ENCODE measurements at regions of chr5 and their contacts with region 1.

Region 1: GRCh38 chr5:124524552-124525232 is 221.7 kb downstream of the ZNF608 start:
- DNase-seq: no peak
- H3K4me3 ChIP-seq: no peak overlapping the region
- H3K4me3 Mint-ChIP-seq: no peak overlapping the region
- H3K27ac Mint-ChIP-seq: peak overlapping the region; percentile 14
- H3K4me1 ChIP-seq: peaks cover 26% of the 10 kb centered on the region
- H3K4me1 Mint-ChIP-seq: peaks cover 25% of the 10 kb centered on the region
- H3K27me3 ChIP-seq: no peaks in the 10 kb centered on the region
- H3K27me3 Mint-ChIP-seq: no peaks in the 10 kb centered on the region
- CTCF ChIP-seq: no peak

Region 2: DNA sequence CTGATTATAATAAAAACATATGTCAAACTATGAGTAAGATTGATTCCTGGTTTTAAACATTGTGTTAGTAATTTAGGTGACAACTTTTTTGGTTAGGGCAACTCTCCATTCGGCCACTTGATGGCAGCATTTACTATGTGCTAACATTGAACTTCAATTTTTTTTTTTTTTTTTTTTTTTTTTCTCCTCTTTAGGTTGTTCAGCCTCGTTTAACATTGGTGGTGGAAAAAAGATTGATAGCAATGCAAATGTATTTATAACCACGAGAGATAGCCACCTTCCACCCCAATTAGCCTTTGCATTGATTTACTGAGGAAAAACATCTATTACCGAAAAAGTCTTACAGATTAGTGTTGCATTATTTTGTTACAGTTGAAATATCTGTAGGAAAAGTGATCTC is 853.6 kb before region 1 on chr5:
- CTCF ChIA-PET with region 1: no interaction called
- POLR2A ChIA-PET with region 1: no interaction called
- intact Hi-C with region 1: loop called (anchors 10 kb)
- DNase-seq: peak; percentile 38 to 57
- H3K4me3 ChIP-seq: no peak overlapping the region
- H3K4me3 Mint-ChIP-seq: no peak overlapping the region
- H3K27ac Mint-ChIP-seq: no peak overlapping the region
- H3K4me1 ChIP-seq: no peaks in the 10 kb centered on the region; the same call in 1 of the 2 replicates
- H3K4me1 Mint-ChIP-seq: no peaks in the 10 kb centered on the region
- H3K27me3 ChIP-seq: no peaks in the 10 kb centered on the region
- H3K27me3 Mint-ChIP-seq: no peaks in the 10 kb centered on the region
- CTCF ChIP-seq: peak; percentile 60 to 78

Region 3: DNA sequence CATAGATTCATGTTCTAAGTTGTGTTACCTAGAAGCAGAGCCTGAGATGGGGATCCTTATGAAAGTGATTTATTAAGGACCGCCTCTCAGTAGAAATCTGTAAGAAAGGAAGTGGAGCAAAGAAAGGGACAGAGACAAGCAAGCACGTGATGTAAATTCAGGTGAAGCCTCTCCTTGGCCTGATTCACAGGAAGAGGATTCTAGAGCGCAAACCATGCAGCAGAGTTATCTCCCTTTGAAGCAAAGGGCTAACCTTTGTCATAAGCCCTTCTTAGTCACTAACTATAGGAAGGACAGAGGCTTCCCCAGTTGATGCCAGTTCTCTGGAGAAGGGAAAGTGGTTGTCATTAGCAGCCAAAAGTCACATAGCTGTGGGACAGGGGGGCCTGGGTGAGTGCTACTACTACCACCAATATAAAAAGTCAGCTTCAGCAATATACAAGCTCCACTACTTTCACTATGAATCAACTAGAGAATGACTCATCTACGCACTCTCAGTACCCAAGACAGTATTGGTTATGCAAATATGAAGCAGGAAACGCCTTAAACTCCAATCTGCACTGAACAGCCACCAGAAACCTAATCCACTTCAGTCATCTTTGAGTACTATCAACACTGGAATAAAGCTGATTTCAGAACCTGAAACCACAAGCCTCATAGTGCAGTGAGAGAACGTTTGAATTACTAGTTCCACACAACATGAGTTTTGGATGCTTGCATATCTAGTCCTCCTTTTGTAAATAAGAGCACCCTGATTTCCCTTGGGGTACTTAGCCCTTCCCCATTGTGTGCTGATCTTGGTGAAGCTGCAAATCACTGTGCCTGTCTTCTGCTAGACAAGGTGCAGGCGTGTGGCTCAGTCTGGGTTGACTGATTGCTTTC is 59.0 kb after region 1 on chr5:
- CTCF ChIA-PET with region 1: no interaction called
- POLR2A ChIA-PET with region 1: no interaction called
- intact Hi-C with region 1: loop called (anchors 1 kb)
- DNase-seq: no peak
- H3K4me3 ChIP-seq: no peak overlapping the region
- H3K4me3 Mint-ChIP-seq: no peak overlapping the region
- H3K27ac Mint-ChIP-seq: peak overlapping the region; percentile 89
- H3K4me1 ChIP-seq: peaks cover 38% of the 10 kb centered on the region
- H3K4me1 Mint-ChIP-seq: peaks cover 30% of the 10 kb centered on the region
- H3K27me3 ChIP-seq: no peaks in the 10 kb centered on the region
- H3K27me3 Mint-ChIP-seq: no peaks in the 10 kb centered on the region
- CTCF ChIP-seq: no peak

Region 4: GRCh38 chr5:124655922-124656511 is 131.3 kb after region 1 on chr5:
- CTCF ChIA-PET with region 1: interaction called, 6 read pairs
- POLR2A ChIA-PET with region 1: no interaction called
- intact Hi-C with region 1: loop called (anchors 1 kb)
- DNase-seq: peak; percentile 80 to 87
- H3K4me3 ChIP-seq: no peak overlapping the region
- H3K4me3 Mint-ChIP-seq: no peak overlapping the region
- H3K27ac Mint-ChIP-seq: no peak overlapping the region
- H3K4me1 ChIP-seq: peaks cover 72% of the 10 kb centered on the region
- H3K4me1 Mint-ChIP-seq: peaks cover 9% of the 10 kb centered on the region
- H3K27me3 ChIP-seq: no peaks in the 10 kb centered on the region
- H3K27me3 Mint-ChIP-seq: no peaks in the 10 kb centered on the region
- CTCF ChIP-seq: no peak

Region 5: GRCh38 chr5:124996764-124997077 is 472.0 kb after region 1 on chr5:
- CTCF ChIA-PET with region 1: no interaction called
- POLR2A ChIA-PET with region 1: no interaction called
- intact Hi-C with region 1: loop called (anchors 2 kb)
- DNase-seq: peak in 1 of 2 experiments; percentile 59
- H3K4me3 ChIP-seq: no peak overlapping the region
- H3K4me3 Mint-ChIP-seq: peak overlapping the region; percentile 52
- H3K27ac Mint-ChIP-seq: peak overlapping the region; percentile 93
- H3K4me1 ChIP-seq: peaks cover 49% of the 10 kb centered on the region
- H3K4me1 Mint-ChIP-seq: peaks cover 39% of the 10 kb centered on the region
- H3K27me3 ChIP-seq: no peaks in the 10 kb centered on the region; the same call in 1 of the 2 replicates
- H3K27me3 Mint-ChIP-seq: no peaks in the 10 kb centered on the region
- CTCF ChIP-seq: no peak

Measured in Caco-2 (cell line).